Gastrocnemius medialis (tissue), 4 donors: ENCODE measurements at regions of chr12 and their contacts with region 1.

Region 1: GRCh38 chr12:32365473-32366064 is 33.8 kb upstream of the FGD4 start:
- DNase-seq: peak; percentile 4 to 23
- ATAC-seq: peak in 1 of 2 donors; percentile 68
- H3K4me3 ChIP-seq: no peak overlapping the region
- H3K27ac ChIP-seq: no peak overlapping the region
- H3K4me1 ChIP-seq: no peaks in the 10 kb centered on the region
- H3K27me3 ChIP-seq: no peaks in the 10 kb centered on the region
- CTCF ChIP-seq: peak; percentile 50 to 86 (median 71)
- POLR2A ChIP-seq: no peak

Region 2: DNA sequence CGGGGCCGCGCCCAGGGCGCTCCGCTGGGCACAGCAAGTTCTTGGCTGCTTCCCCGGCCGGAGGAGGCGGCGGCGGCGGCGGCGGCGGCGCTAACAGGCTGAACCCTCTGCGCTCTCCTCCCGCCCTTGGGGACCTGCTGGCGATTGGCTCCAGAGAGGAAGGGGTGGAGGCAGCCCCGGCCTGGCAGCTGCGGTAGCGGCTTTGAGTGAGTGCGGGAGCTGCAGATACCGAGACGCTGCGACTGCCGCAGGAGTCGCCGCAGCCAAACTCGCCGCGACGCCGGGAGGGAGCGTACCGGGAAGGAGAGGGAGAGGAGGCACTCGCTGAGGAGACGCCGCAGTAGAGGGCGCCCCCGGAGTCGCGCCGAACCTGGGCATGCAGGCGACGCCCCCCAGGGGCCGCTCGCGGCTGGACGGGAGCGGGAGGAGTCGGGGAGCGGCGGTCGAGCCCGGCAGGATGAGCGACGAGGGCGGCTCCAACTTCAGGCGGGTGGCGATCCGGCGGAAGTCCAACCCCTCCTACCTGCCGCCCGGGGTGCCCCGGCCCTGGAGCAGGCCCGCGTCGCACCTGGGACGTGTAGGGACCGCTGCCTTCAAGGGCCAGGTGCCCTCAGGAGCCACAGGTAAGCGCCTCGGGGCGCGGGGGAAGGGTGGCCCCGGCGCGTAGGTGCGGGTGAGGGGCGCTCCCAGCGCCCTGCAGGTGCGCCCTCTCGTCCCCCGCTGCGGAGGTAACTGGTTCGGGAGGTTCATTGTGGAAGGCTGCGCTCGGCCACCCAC is 34.0 kb after region 1 on chr12 and contains the start of gene FGD4:
- in situ Hi-C with region 1: no loop called
- intact Hi-C with region 1: loop called (anchors 5 kb)
- DNase-seq: peak; percentile 87 to 91
- ATAC-seq: peak; percentile 93 to 94
- H3K4me3 ChIP-seq: peak within 1 kb of the TSS; percentile 65 to 95 (median 82)
- H3K27ac ChIP-seq: peak within 1 kb of the TSS; percentile 63 to 86 (median 86)
- H3K4me1 ChIP-seq: peaks cover 4 to 16% of the 10 kb centered on the region in 2 donors
- H3K27me3 ChIP-seq: no peaks in the 10 kb centered on the region
- CTCF ChIP-seq: peak in 4 of 5 experiments; percentile 19 to 54 (median 46)
- POLR2A ChIP-seq: peak; percentile 76 to 83
- total RNA-seq, gene FGD4: 18.8 to 60.3 (median 40.8) TPM

Region 3: GRCh38 chr12:32516230-32516629 is 150.7 kb after region 1 on chr12:
- in situ Hi-C with region 1: no loop called
- intact Hi-C with region 1: no loop called
- DNase-seq: no peak
- ATAC-seq: no peak
- H3K4me3 ChIP-seq: no peak overlapping the region
- H3K27ac ChIP-seq: peak overlapping the region in 1 of 4 donors; percentile 49
- H3K4me1 ChIP-seq: peaks cover 26 to 31% of the 10 kb centered on the region in 2 donors
- H3K27me3 ChIP-seq: no peaks in the 10 kb centered on the region
- CTCF ChIP-seq: no peak
- POLR2A ChIP-seq: no peak

Region 4: DNA sequence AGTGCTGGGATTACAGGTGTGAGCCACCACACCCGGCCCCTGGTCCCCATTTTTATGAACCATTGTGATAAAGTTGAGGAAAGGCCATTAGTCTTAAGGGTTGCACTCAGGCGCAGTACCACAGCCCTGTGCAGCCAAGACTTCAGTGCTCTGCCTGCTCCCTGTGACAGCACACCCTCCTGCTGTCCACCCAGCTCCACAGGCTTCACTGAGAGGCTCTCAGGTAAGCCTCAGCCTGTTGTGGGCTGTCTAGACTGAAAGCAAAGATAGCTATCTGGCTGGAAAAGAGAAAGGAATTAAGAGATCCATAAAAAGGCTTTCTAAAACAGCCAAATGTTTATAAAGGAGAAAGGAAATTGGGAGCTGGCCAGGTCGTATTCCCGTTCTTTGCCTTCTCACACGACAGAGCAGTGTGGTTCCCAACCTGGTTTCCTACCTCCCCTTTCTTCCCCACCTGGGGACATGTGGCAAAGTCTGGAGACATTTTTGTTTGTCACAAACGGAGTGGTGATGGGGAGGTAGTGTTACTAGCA is 294.4 kb after region 1 on chr12:
- in situ Hi-C with region 1: loop called in 1 of 4 experiments (anchors 5 kb)
- intact Hi-C with region 1: no loop called
- DNase-seq: no peak
- ATAC-seq: peak in 1 of 2 donors; percentile 7
- H3K4me3 ChIP-seq: peak overlapping the region in 1 of 4 donors; percentile 9
- H3K27ac ChIP-seq: peak overlapping the region; percentile 81 to 93 (median 87)
- H3K4me1 ChIP-seq: peaks cover 19 to 23% of the 10 kb centered on the region in 2 donors
- H3K27me3 ChIP-seq: no peaks in the 10 kb centered on the region
- CTCF ChIP-seq: no peak
- POLR2A ChIP-seq: no peak

Region 5: DNA sequence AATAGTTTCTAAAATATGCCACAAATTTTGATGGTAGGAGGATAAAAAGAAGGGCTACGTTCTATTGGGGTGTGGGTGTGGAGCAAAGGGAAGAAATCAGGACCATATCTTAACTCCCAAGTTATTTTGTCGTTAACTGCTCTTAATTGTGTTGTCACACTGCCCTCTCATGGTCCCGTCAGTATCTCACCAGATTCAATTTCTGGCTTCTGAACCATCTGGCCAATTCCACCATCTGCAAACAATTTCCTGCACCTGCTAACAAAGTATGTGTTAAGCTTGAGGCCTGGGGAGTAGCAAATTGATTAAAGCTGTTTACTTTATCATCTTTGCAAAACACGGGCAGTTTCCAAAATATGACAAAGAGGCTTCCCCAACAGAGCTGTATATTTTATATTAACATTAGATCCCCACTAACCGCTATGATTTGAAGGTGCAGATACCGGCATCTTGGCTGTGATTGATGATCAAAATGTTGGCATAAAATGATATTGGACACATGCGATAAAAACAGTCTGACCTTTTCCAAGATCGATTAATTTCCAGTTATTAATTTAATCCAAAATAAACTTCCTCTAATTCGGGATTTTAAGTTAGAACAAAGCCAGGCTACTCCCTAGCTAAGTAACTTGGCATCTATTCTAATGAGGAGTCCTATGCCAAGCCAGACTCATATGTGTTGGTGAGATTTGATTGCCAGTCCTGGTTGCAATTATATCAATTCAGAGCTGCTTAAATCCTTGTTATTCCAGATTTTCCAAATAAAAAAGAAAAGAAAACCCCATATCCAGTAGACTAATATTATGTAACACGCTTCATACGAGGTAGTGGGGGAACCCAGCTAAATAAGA is 306.6 kb after region 1 on chr12:
- in situ Hi-C with region 1: loop called in 2 of 4 experiments (anchors 5 to 10 kb)
- intact Hi-C with region 1: loop called (anchors 1 kb)
- DNase-seq: peak in 1 of 2 donors; percentile 27
- ATAC-seq: peak; percentile 95 to 97
- H3K4me3 ChIP-seq: no peak overlapping the region
- H3K27ac ChIP-seq: no peak overlapping the region
- H3K4me1 ChIP-seq: peaks cover 0 to 4% of the 10 kb centered on the region in 2 donors
- H3K27me3 ChIP-seq: no peaks in the 10 kb centered on the region
- CTCF ChIP-seq: peak; percentile 36 to 64 (median 55)
- POLR2A ChIP-seq: no peak

Region 6: DNA sequence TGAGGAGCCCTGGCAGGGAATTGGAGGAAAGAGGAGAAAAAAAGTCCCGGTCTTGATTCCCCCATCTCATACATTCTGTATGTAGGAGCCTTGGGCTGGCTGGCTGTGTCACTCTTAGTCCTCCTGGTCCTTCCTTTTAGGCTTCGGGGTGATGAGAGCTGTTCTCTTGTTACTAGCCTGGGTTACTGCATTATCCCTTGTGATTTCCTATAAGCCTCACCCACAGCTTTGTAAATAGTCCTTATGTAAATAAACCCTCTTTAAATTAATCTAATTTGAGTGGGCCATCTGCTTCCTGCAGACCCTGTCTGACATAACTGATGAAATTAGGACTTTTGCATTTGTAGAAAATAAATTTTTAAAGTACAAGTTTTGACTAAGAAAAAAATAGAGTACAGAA is 332.7 kb after region 1 on chr12:
- in situ Hi-C with region 1: no loop called
- intact Hi-C with region 1: no loop called
- DNase-seq: no peak
- ATAC-seq: no peak
- H3K4me3 ChIP-seq: no peak overlapping the region
- H3K27ac ChIP-seq: no peak overlapping the region
- H3K4me1 ChIP-seq: peaks cover 0 to 4% of the 10 kb centered on the region in 2 donors
- H3K27me3 ChIP-seq: no peaks in the 10 kb centered on the region
- CTCF ChIP-seq: no peak
- POLR2A ChIP-seq: no peak

Region 7: GRCh38 chr12:34022079-34022830 is 1656.7 kb after region 1 on chr12 and contains the start of gene ALG10:
- in situ Hi-C with region 1: loop called in 1 of 4 experiments (anchors 25 kb)
- intact Hi-C with region 1: no loop called
- DNase-seq: peak; percentile 95 to 96
- ATAC-seq: peak; percentile 100
- H3K4me3 ChIP-seq: peak within 1 kb of the TSS; percentile 83 to 93 (median 88)
- H3K27ac ChIP-seq: peak within 1 kb of the TSS; percentile 84 to 91 (median 84)
- H3K4me1 ChIP-seq: peaks cover 14 to 18% of the 10 kb centered on the region in 2 donors
- H3K27me3 ChIP-seq: no peaks in the 10 kb centered on the region
- CTCF ChIP-seq: peak; percentile 60 to 85 (median 64)
- POLR2A ChIP-seq: no peak
- total RNA-seq, gene ALG10: 1.3 to 3.3 (median 3.0) TPM